WTC11 (cell line): ENCODE measurements at regions of chr1 and their contacts with region 1.

Region 1: DNA sequence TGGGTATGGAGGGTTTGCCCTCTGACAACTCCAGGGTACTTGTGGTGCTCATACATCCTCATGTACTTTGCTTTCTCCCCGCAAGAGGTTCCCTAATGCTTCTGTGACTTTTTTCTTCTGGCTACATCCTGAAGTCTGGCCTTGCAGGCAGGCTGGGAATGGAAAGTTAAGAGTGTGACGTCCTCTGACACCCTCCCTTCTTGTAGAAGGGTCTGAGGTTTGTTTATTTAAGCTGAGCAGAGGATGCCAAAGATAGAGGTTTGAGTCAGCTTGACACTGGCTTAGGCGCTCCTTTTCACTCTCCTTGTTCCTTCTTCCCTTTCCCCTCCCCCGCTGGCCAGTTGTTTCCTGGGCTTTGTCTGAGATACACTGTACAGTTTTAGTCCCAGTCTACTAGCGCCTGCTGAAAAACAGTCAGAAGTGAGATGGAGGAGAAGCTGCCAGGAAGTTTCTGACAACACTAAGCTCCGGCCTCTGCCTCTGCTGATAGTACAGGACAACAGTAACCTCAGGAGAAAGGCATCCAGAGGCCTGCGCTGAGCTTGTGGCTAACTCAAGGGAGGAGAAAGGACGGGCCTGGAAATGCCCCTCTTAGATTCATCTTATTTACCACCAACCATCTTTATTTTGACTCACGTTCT is at the start of gene MACF1:
- DNase-seq: no peak
- ATAC-seq: peak; percentile 83
- H3K4me3 Mint-ChIP-seq: peak within 1 kb of the TSS; percentile 3; the same call in 1 of the 2 replicates
- H3K27ac Mint-ChIP-seq: peak within 1 kb of the TSS; percentile 93
- H3K4me1 Mint-ChIP-seq: peaks cover 31% of the 10 kb centered on the region
- H3K27me3 Mint-ChIP-seq: no peaks in the 10 kb centered on the region
- CTCF ChIP-seq: no peak
- total RNA-seq, gene MACF1: 214 to 327 TPM (median 222 TPM) in 3 replicates

Region 2: DNA sequence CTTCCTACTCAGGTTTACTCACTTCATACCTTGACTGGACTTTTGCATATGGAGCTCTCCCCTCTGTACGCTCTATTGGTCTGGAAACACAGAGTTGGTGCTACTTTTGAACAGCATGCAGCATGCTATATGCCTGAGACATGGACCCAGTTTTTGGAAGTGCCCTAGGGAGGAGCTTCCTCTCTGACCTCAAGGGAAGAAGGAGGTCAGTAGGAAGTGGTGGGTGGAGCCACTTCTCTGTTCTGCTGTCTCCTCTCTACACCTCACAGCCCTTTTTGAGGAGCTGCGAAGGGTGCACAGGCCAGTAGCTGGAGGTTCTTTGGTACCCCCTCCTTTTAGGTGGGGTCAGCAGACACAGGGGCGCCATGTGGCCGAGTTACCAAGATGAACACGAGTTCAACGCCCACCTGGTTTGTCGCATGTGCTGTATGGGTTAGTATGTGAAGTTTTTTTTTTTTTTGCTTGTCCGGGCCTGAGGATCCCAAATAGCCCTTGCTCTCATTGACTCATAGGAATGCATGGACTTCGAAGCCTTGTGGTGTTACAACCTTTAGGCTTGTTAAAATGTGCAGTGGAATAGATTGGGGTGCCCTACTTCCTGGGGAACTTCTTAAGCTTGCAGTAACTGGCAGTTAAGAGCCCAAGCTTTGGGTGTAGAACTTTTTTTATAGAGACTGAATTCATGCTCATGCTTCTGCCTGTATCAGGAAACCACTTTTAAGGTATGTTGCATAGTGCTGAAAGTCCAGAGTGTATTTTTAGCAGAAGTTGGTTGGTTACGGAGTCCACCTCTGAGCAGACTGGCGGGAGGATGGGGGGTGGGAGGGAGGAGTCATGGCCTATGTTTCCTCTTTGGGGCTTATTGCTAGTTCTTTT is 10.7 kb after region 1 on chr1:
- CTCF ChIA-PET with region 1: interaction called, 15 read pairs
- POLR2A ChIA-PET with region 1: interaction called, 3 read pairs
- DNase-seq: no peak
- ATAC-seq: peak; percentile 59
- H3K4me3 Mint-ChIP-seq: no peak overlapping the region
- H3K27ac Mint-ChIP-seq: peak overlapping the region; percentile 68
- H3K4me1 Mint-ChIP-seq: peaks cover 46% of the 10 kb centered on the region
- H3K27me3 Mint-ChIP-seq: no peaks in the 10 kb centered on the region
- CTCF ChIP-seq: no peak